H1 (cell line): ENCODE measurements at regions of chr5 and their contacts with region 1.

Region 1: GRCh38 chr5:33153831-33154230 is 286.9 kb upstream of the TARS1 start:
- DNase-seq: no peak
- H3K4me3 ChIP-seq: no peak overlapping the region
- H3K27ac ChIP-seq: no peak overlapping the region
- H3K4me1 ChIP-seq: no peaks in the 10 kb centered on the region
- H3K27me3 ChIP-seq: no peaks in the 10 kb centered on the region
- CTCF ChIP-seq: no peak
- EP300 ChIP-seq: no peak
- POLR2A ChIP-seq: no peak
- RAD21 ChIP-seq: no peak

Region 2: DNA sequence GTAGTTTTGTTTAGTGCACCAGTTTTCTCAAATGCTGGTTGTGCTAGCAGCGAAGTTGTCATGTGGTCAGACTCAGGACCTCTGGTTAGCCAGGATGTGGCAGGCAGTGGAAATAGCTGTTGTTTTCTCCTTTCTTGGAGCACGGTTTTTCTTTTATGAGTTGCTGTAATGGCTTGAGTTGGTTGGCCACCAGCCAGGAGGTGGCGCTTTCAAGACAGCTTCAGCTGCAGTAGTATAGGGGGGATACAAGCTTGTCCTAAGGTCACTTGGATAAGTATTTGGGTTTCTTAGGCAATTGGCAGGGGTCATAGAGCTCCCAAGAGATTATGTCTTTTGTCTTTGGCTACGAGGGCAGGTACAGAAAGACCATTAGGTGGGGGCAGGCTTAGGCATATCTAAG is 12.7 kb after region 1 on chr5:
- CTCF ChIA-PET with region 1: interaction called, 13 read pairs
- POLR2A ChIA-PET with region 1: no interaction called
- DNase-seq: peak; percentile 3 to 50
- H3K4me3 ChIP-seq: no peak overlapping the region
- H3K27ac ChIP-seq: no peak overlapping the region
- H3K4me1 ChIP-seq: no peaks in the 10 kb centered on the region
- H3K27me3 ChIP-seq: no peaks in the 10 kb centered on the region
- CTCF ChIP-seq: peak; percentile 22 to 43 (median 41)
- EP300 ChIP-seq: no peak
- POLR2A ChIP-seq: no peak
- RAD21 ChIP-seq: peak; percentile 42 to 56

Region 3: DNA sequence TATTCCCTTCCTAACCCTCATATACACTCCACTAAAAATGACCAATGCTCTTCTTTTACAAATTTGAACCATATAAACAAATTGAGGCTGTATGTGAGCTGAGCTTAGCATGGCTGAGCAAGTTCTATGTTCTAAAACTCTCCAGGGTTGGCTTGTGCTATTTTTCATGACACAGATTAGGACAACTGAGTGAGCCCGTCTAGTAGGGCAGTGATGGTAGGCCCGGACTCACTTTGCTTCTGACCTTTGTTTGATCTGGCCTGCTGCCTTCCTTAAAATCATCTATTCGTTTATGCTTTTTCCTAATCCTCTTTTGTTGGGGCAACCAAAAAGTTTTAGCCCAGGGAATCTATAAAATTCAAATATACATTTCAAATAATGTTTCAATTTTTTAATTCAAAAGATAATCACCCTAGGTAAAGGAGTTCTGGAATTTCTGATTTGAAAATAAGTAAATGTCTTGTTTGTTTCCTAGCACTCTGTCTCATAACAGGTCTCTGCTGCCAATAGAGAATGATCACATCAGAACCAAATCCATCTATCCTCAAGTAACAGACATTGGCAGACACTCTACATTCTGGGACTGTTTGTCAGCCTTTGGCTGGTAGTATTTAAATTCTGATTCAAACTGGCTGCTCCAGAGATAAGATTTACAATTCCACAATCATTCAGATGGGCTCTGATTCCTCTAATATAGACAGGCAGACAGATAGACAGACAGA is 69.9 kb after region 1 on chr5:
- CTCF ChIA-PET with region 1: no interaction called
- POLR2A ChIA-PET with region 1: no interaction called
- DNase-seq: no peak
- H3K4me3 ChIP-seq: no peak overlapping the region
- H3K27ac ChIP-seq: no peak overlapping the region
- H3K4me1 ChIP-seq: no peaks in the 10 kb centered on the region; a peak in 2 of 7 replicates
- H3K27me3 ChIP-seq: no peaks in the 10 kb centered on the region
- CTCF ChIP-seq: no peak
- EP300 ChIP-seq: no peak
- POLR2A ChIP-seq: no peak
- RAD21 ChIP-seq: no peak